ENCODE measurements at regions of chr16 and their contacts with region 1.

Region 1: DNA sequence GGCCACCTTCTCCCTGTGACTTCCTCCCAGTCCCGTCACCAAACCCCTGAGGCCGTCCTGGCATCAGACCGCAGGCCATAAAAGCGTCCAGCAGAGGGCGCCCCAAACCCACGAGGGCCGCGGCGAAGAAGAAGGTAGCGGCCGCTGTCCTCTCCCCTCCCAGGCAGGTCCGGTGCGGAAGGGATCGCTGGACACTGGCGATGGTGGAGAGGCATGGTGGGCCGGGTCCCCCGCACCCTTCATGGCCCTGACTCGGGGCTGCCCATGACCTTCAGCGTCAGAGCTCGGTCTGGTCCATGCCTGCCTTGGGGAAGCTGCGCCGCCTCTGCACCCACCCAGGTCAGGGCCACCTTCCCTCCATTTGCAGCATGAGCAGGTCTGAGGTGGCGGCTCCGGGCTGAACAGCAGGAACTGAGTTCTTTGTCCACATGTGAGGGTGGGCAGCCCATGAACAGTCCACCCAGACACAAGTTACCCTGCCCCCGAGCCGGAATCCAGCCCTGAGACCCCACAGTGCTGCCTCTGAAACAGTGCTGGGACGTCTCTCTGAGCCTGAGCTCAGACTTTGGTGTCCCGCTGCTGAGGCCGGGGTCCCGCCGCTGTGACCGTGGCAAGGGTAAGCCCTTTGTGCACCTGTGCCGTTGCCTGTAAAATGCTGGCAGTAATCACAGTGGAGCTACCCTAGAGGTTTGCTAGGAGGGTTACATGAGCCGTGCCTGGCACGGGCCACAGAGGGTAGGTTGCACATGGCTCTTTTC is 40.8 kb upstream of the CMIP start:
- DNase-seq: peak; percentile 77 to 82
- H3K4me3 ChIP-seq: no peak overlapping the region
- H3K27ac ChIP-seq: no peak overlapping the region
- H3K4me1 ChIP-seq: no peaks in the 10 kb centered on the region
- H3K27me3 ChIP-seq: no peaks in the 10 kb centered on the region
- CTCF ChIP-seq: peak; percentile 95 to 96 (median 95)
- POLR2A ChIP-seq: no peak

Region 2: GRCh38 chr16:81432937-81433557 is 29.3 kb after region 1 on chr16:
- intact Hi-C with region 1: no loop called
- DNase-seq: no peak
- H3K4me3 ChIP-seq: no peak overlapping the region
- H3K27ac ChIP-seq: no peak overlapping the region
- H3K4me1 ChIP-seq: no peaks in the 10 kb centered on the region
- H3K27me3 ChIP-seq: no peaks in the 10 kb centered on the region
- CTCF ChIP-seq: no peak
- POLR2A ChIP-seq: no peak

Region 3: GRCh38 chr16:81723098-81723723 is 319.4 kb after region 1 on chr16:
- intact Hi-C with region 1: loop called (anchors 5 kb)
- DNase-seq: peak in 1 of 2 donors; percentile 50
- H3K4me3 ChIP-seq: no peak overlapping the region
- H3K27ac ChIP-seq: no peak overlapping the region
- H3K4me1 ChIP-seq: no peaks in the 10 kb centered on the region
- H3K27me3 ChIP-seq: no peaks in the 10 kb centered on the region
- CTCF ChIP-seq: peak; percentile 67 to 92 (median 84)
- POLR2A ChIP-seq: no peak

Measured in uterus (tissue), 4 donors.